Colonic mucosa (tissue), 4 donors: ENCODE measurements at regions of chr21 and their contacts with region 1.

Region 1: GRCh38 chr21:34022627-34023335 is 50.6 kb upstream of the MRPS6 start:
- DNase-seq: no peak
- H3K4me3 ChIP-seq: no peak overlapping the region
- H3K27ac ChIP-seq: peak overlapping the region; percentile 8
- H3K4me1 ChIP-seq: peaks cover 3% of the 10 kb centered on the region
- H3K27me3 ChIP-seq: no peaks in the 10 kb centered on the region
- CTCF ChIP-seq: no peak

Region 2: DNA sequence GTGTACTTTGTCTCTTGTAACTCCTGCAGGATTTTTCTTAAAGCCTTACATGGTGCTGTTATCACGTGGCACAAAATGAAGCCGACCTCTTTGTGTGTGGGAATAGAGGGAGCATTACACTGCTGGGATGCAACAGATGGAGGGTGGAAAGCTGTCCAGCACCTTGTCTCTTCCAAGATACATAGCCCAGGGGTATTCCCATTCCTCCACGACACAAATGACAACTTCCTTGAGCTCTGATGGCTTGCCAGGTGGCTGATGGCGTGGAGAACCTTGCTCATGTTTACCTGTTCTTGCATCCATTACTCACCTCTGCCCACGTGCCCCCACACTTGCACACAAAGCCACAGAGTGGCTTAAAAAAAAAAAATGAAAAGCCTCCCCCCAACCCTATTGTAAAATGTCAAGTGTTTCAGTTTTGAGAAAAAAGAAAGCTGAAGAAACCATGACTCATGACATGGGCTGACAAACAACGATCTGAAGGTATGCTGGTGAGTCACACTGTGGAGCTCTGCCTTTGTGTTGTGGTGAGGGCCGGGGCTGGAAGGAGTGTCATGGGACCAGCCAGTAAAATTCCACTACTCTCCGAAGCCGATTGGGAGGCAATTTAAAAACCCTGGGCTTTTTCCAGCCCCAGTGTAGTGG is 75.2 kb before region 1 on chr21:
- intact Hi-C with region 1: no loop called
- DNase-seq: peak; percentile 76
- H3K4me3 ChIP-seq: no peak overlapping the region
- H3K27ac ChIP-seq: peak overlapping the region; percentile 76
- H3K4me1 ChIP-seq: peaks cover 4% of the 10 kb centered on the region
- H3K27me3 ChIP-seq: no peaks in the 10 kb centered on the region
- CTCF ChIP-seq: no peak

Region 3: GRCh38 chr21:33993286-33994231 is 29.2 kb before region 1 on chr21:
- intact Hi-C with region 1: loop called (anchors 2 kb)
- DNase-seq: peak; percentile 63
- H3K4me3 ChIP-seq: no peak overlapping the region
- H3K27ac ChIP-seq: peak overlapping the region; percentile 25
- H3K4me1 ChIP-seq: no peaks in the 10 kb centered on the region
- H3K27me3 ChIP-seq: no peaks in the 10 kb centered on the region
- CTCF ChIP-seq: no peak

Region 4: GRCh38 chr21:34534522-34534921 is 511.7 kb after region 1 on chr21:
- intact Hi-C with region 1: no loop called
- DNase-seq: no peak
- H3K4me3 ChIP-seq: no peak overlapping the region
- H3K27ac ChIP-seq: no peak overlapping the region
- H3K4me1 ChIP-seq: no peaks in the 10 kb centered on the region
- H3K27me3 ChIP-seq: no peaks in the 10 kb centered on the region
- CTCF ChIP-seq: no peak